Heart left ventricle (tissue), 16 donors: ENCODE measurements at regions of chr2 and their contacts with region 1.

Region 1: DNA sequence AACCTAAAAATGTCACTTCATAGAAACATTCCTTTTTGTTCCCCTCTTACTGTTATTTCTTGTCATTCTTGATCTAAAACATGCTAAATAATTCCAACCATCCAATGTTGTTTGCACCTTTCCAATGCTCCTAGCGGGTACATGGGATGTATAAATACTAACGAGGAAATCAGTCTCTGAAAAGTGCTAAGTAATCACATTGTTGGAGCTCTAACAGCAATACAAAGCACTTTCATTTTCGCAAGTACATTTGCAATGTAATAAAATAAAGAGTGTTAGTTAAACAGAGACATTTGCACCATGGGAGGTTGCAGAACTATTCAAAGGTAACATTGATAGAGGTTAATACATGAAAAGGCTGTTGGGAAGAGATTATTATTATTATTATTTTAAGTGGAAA is 286.2 kb upstream of the ACVR2A start:
- DNase-seq: no peak
- ATAC-seq: no peak
- H3K4me3 ChIP-seq: no peak overlapping the region
- H3K27ac ChIP-seq: peak overlapping the region in 1 of 12 donors; percentile 29
- H3K4me1 ChIP-seq: peaks cover 0 to 20% (median 12%) of the 10 kb centered on the region in 12 donors
- H3K27me3 ChIP-seq: no peaks in the 10 kb centered on the region
- CTCF ChIP-seq: no peak
- POLR2A ChIP-seq: no peak

Region 2: DNA sequence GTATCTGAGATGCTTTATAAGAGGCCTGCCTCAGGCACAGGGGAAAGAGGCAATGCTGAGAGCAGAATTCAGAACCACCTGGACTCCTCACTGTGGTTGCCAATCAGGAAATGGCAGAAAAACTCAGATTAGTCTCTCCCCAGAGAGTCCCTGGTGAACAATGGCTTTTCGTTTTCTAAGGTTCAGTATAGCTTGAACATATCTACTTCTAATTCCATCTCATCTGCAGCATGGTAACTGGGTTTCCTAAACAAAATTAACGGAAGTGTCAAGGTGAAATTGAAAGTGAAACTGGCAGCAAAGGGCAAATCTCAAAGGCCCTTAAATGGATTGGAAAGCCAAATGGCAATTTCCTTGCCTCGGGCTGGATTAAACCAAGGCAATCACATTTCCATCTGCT is 194.0 kb before region 1 on chr2:
- intact Hi-C with region 1: no loop called
- DNase-seq: no peak
- ATAC-seq: no peak
- H3K4me3 ChIP-seq: no peak overlapping the region
- H3K27ac ChIP-seq: no peak overlapping the region
- H3K4me1 ChIP-seq: no peaks in the 10 kb centered on the region
- H3K27me3 ChIP-seq: no peaks in the 10 kb centered on the region
- CTCF ChIP-seq: no peak
- POLR2A ChIP-seq: no peak

Region 3: GRCh38 chr2:147433822-147434221 is 124.8 kb before region 1 on chr2:
- intact Hi-C with region 1: loop called in 1 of 10 experiments (anchors 10 kb)
- DNase-seq: no peak
- ATAC-seq: no peak
- H3K4me3 ChIP-seq: no peak overlapping the region
- H3K27ac ChIP-seq: no peak overlapping the region
- H3K4me1 ChIP-seq: no peaks in the 10 kb centered on the region
- H3K27me3 ChIP-seq: no peaks in the 10 kb centered on the region
- CTCF ChIP-seq: no peak
- POLR2A ChIP-seq: no peak

Region 4: DNA sequence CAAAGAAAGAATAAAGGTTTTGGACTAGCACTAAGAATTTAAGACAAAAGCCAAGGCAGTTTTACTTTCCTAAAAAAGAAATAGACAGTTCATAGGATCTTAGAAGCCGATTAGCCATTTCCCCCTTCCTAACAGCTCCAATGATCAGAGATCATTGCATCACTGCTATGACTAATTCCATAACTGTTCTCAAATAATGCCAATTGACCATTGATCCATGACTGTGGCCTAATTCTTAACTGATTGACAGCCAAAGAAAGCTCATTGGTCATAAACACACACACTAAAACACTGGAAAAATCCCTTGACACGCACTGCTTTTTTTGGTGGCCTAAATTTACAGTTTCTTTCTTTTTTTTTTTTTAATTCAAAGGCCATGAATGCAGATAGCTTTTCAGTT is 58.8 kb before region 1 on chr2:
- intact Hi-C with region 1: loop called in 1 of 10 experiments (anchors 5 kb)
- DNase-seq: no peak
- ATAC-seq: no peak
- H3K4me3 ChIP-seq: no peak overlapping the region
- H3K27ac ChIP-seq: peak overlapping the region in 6 of 12 donors; percentile 32 to 80 (median 52)
- H3K4me1 ChIP-seq: peaks cover 0 to 8% (median 0%) of the 10 kb centered on the region in 12 donors
- H3K27me3 ChIP-seq: no peaks in the 10 kb centered on the region
- CTCF ChIP-seq: no peak
- POLR2A ChIP-seq: no peak

Region 5: GRCh38 chr2:147603447-147603846 is 44.8 kb after region 1 on chr2:
- intact Hi-C with region 1: no loop called
- DNase-seq: no peak
- ATAC-seq: no peak
- H3K4me3 ChIP-seq: no peak overlapping the region
- H3K27ac ChIP-seq: no peak overlapping the region
- H3K4me1 ChIP-seq: no peaks in the 10 kb centered on the region
- H3K27me3 ChIP-seq: no peaks in the 10 kb centered on the region
- CTCF ChIP-seq: no peak
- POLR2A ChIP-seq: no peak

Region 6: DNA sequence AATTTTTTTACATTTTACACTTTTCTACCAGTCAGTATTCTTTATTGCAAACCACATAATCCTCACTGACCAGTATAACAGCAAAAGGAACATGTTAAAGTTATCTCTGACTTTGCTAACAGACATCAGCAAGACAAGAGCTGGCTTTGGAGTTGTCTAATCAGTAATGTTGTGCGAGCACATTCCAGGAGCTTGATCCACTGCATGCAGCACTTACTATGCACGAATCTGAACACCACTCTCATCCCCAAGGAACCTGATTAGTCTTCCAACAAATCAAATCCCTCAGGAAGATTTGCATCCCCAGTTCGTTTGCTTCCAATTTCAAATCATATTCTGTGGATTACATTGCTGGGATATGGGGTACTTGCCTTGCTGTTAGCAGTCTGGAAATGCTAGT is 816.6 kb after region 1 on chr2:
- intact Hi-C with region 1: no loop called
- DNase-seq: no peak
- ATAC-seq: peak in 2 of 4 donors; percentile 47 to 51
- H3K4me3 ChIP-seq: no peak overlapping the region
- H3K27ac ChIP-seq: no peak overlapping the region
- H3K4me1 ChIP-seq: peaks cover 0 to 5% (median 0%) of the 10 kb centered on the region in 12 donors
- H3K27me3 ChIP-seq: no peaks in the 10 kb centered on the region
- CTCF ChIP-seq: no peak
- POLR2A ChIP-seq: no peak